ENCODE measurements at regions of chr2 and their contacts with region 1.

Region 1: GRCh38 chr2:10832203-10832936 is 19.8 kb upstream of the PDIA6 start:
- DNase-seq: peak; percentile 76
- H3K4me3 Mint-ChIP-seq: no peak overlapping the region
- H3K27ac Mint-ChIP-seq: no peak overlapping the region
- H3K4me1 Mint-ChIP-seq: no peaks in the 10 kb centered on the region
- H3K27me3 Mint-ChIP-seq: peaks cover 45% of the 10 kb centered on the region
- CTCF ChIP-seq: peak; percentile 97

Region 2: GRCh38 chr2:10355471-10356458 is 476.6 kb before region 1 on chr2:
- CTCF ChIA-PET with region 1: no interaction called
- POLR2A ChIA-PET with region 1: no interaction called
- intact Hi-C with region 1: no loop called
- DNase-seq: no peak
- H3K4me3 Mint-ChIP-seq: no peak overlapping the region
- H3K27ac Mint-ChIP-seq: peak overlapping the region; percentile 10
- H3K4me1 Mint-ChIP-seq: peaks cover 23% of the 10 kb centered on the region
- H3K27me3 Mint-ChIP-seq: no peaks in the 10 kb centered on the region
- CTCF ChIP-seq: no peak

Region 3: GRCh38 chr2:10812362-10813162 is 19.8 kb before region 1 on chr2 and contains the start of gene PDIA6:
- CTCF ChIA-PET with region 1: interaction called, 28 read pairs
- POLR2A ChIA-PET with region 1: interaction called, 3 read pairs
- intact Hi-C with region 1: no loop called
- DNase-seq: peak; percentile 96
- H3K4me3 Mint-ChIP-seq: peak within 1 kb of the TSS; percentile 84
- H3K27ac Mint-ChIP-seq: peak within 1 kb of the TSS; percentile 92
- H3K4me1 Mint-ChIP-seq: peaks cover 27% of the 10 kb centered on the region
- H3K27me3 Mint-ChIP-seq: peaks cover 18% of the 10 kb centered on the region
- CTCF ChIP-seq: no peak
- total RNA-seq, gene PDIA6: 254 and 339 TPM in 2 replicates

Region 4: DNA sequence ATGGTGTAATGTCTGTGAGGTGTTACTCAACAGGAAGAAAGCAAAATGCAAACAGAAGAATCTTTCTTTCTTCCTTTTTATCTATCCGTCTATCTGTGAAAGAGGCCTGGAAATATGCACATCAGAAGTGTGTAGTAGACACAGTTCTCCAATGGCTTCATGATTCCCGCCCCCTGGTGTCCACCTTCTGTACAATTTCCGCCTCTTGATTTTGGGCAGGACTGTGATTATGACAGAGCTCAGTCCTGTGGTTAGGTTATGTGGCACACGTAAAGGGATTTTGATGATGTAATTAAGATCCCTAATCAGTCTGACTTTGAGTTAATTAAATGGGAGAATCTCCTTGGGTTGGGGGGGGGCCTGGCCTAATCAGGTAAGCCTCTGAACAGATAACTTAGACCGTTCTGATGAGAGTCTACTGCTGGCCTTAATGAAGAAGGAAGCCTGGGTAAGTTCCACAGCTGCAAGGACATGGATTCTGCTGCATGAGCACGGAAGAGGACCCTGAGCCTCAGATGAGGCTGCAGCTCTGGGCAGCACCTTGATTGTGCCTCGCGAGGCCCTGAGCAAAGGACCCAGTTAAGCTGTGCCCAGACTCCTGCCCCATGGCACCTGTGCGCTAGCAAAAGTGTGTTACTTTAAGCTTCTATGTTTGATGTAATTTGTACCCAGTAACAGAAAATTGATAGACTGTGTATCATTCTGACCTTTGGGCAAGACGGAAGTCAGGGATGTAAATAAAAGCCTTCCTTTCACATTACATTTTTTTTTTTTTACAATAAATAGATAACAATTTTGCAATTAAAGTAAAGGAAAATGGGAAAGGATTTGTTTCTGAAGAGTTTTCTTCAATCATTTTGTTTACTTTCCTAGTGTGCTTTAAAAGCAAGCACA is 68.1 kb after region 1 on chr2:
- CTCF ChIA-PET with region 1: interaction called, 9 read pairs
- POLR2A ChIA-PET with region 1: no interaction called
- intact Hi-C with region 1: loop called (anchors 2 kb)
- DNase-seq: peak; percentile 82
- H3K4me3 Mint-ChIP-seq: no peak overlapping the region
- H3K27ac Mint-ChIP-seq: no peak overlapping the region
- H3K4me1 Mint-ChIP-seq: peaks cover 15% of the 10 kb centered on the region
- H3K27me3 Mint-ChIP-seq: no peaks in the 10 kb centered on the region
- CTCF ChIP-seq: peak; percentile 30

Region 5: GRCh38 chr2:10947005-10947440 is 114.7 kb after region 1 on chr2:
- CTCF ChIA-PET with region 1: no interaction called
- POLR2A ChIA-PET with region 1: no interaction called
- intact Hi-C with region 1: no loop called
- DNase-seq: peak; percentile 63
- H3K4me3 Mint-ChIP-seq: peak overlapping the region; percentile 47
- H3K27ac Mint-ChIP-seq: no peak overlapping the region
- H3K4me1 Mint-ChIP-seq: peaks cover 7% of the 10 kb centered on the region
- H3K27me3 Mint-ChIP-seq: peaks cover 36% of the 10 kb centered on the region
- CTCF ChIP-seq: no peak

Region 6: GRCh38 chr2:11124503-11125068 is 292.2 kb after region 1 on chr2:
- CTCF ChIA-PET with region 1: interaction called, 189 read pairs
- POLR2A ChIA-PET with region 1: interaction called, 4 read pairs
- intact Hi-C with region 1: loop called (anchors 1 kb)
- DNase-seq: peak; percentile 56
- H3K4me3 Mint-ChIP-seq: no peak overlapping the region
- H3K27ac Mint-ChIP-seq: no peak overlapping the region
- H3K4me1 Mint-ChIP-seq: no peaks in the 10 kb centered on the region
- H3K27me3 Mint-ChIP-seq: peaks cover 16% of the 10 kb centered on the region
- CTCF ChIP-seq: peak; percentile 92